WTC11 (cell line): ENCODE measurements at regions of chr13 and their contacts with region 1.

Region 1: DNA sequence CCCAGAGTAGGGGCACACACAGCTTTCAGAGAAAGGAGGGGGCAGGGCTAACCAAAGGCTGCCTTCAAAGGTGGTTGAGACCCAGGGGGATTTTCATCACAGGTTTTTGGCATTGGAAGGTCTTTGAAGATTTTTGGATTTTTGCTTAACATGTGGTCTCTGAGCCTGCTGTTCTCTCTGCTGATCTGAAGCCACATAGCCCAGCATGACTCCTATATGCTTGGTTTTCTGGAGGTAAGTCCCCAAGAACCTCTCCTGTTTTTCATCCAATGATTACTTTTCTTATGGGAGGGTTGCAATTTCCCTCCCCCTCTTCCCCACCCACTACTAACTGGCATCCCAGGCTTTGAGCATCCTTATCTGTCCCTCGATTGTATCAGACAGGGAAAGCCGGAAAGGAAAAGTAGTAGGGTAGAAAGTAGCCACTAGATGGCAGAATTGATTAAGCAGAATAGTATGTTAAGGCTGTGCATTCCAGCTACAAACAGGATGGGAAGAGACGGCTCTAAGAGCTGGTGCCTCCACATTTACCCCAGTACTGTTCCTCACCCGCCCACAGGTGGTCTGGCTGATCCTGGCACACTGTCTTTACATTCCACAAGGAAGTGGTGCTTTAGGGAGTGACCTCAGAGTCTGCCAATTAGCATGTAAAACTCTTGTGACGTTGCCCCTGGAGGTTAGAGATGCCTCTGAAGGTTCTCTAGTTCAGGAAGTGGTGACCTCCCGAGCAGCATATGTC is 218.9 kb upstream of the EDNRB start:
- DNase-seq: peak; percentile 46
- ATAC-seq: peak; percentile 99
- H3K4me3 Mint-ChIP-seq: no peak overlapping the region
- H3K27ac Mint-ChIP-seq: no peak overlapping the region
- H3K4me1 Mint-ChIP-seq: peaks cover 12% of the 10 kb centered on the region
- H3K27me3 Mint-ChIP-seq: no peaks in the 10 kb centered on the region
- CTCF ChIP-seq: peak; percentile 46; the same call in 1 of the 2 replicates

Region 2: GRCh38 chr13:78241278-78241919 is 103.8 kb after region 1 on chr13:
- CTCF ChIA-PET with region 1: interaction called, 16 read pairs
- POLR2A ChIA-PET with region 1: no interaction called
- DNase-seq: peak; percentile 73
- ATAC-seq: peak; percentile 86
- H3K4me3 Mint-ChIP-seq: no peak overlapping the region
- H3K27ac Mint-ChIP-seq: no peak overlapping the region
- H3K4me1 Mint-ChIP-seq: peaks cover 16% of the 10 kb centered on the region
- H3K27me3 Mint-ChIP-seq: no peaks in the 10 kb centered on the region; the same call in 1 of the 2 replicates
- CTCF ChIP-seq: peak; percentile 78

Region 3: DNA sequence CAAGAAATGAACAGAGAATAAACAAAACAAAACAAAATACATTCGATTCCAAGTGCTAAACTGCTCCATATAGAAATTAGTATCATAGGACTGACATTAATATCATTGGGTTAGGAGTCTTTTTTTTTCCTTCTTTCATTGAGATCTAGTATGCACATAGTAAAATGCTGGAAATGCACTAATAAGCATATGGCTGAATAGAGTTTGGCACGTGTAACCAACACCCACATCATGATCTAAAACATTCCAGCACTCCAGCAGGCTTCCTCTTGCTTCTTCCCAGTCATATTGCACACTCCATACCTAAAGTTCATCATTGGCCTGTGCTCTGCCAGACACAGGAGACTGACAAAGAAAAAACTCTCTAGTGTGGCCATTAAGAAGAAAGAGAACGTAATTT is 348.2 kb after region 1 on chr13:
- CTCF ChIA-PET with region 1: no interaction called
- POLR2A ChIA-PET with region 1: no interaction called
- DNase-seq: no peak
- ATAC-seq: no peak
- H3K4me3 Mint-ChIP-seq: no peak overlapping the region
- H3K27ac Mint-ChIP-seq: no peak overlapping the region
- H3K4me1 Mint-ChIP-seq: no peaks in the 10 kb centered on the region
- H3K27me3 Mint-ChIP-seq: no peaks in the 10 kb centered on the region
- CTCF ChIP-seq: no peak